HEK293T (cell line): ENCODE measurements at regions of chr7 and their contacts with region 1.

Region 1: GRCh38 chr7:73738612-73739374 is at the start of gene ABHD11:
- DNase-seq: peak; percentile 99

Region 2: DNA sequence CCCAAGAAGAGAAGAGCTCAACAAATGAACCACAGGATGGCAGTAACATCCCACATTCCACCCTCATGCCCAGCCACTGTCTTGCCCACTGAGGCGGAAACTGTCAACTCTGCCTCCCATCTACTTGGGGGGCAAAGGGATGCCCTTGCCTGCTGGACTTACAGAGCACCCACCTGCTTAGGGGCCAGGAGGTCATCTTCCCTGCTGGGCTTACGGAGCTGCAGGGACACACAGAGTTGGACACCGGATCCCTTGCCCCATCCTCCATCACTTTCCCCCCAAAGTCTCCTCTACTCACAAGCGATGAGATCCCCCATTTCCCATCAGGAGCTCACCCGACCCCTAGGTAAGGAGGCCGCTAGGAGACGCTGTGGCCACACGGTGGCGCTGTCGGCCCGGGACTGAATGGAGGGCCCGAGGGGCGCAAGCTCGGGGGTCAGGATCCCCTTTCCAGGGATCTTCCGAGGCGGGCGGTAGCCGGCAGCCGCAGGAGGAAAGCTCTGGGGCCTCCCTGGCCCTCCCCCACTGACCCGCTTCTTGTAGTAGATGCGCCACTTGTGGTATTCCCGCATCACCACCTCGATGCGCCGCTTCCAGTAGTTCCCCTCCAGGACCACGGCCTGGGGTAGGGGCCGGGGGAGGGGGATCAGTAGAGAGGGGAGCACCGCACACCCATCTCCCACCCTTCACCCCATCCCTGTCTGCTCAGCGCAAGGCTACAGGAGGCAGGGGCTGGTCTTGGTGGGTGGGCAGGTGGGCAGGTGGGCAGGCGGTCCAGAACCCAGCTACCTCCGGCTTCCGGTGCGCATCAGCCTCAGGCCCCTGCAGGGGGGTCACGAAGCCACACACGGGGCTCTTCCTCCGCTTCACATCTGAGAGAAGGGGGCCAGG is 131.7 kb before region 1 on chr7:
- CTCF ChIA-PET with region 1: interaction called, 21 read pairs
- POLR2A ChIA-PET with region 1: no interaction called
- DNase-seq: peak; percentile 80

Region 3: GRCh38 chr7:73718905-73719805 is 19.6 kb before region 1 on chr7 and contains the start of gene STX1A:
- CTCF ChIA-PET with region 1: interaction called, 13 read pairs
- POLR2A ChIA-PET with region 1: interaction called, 5 read pairs
- DNase-seq: peak; percentile 94

Region 4: DNA sequence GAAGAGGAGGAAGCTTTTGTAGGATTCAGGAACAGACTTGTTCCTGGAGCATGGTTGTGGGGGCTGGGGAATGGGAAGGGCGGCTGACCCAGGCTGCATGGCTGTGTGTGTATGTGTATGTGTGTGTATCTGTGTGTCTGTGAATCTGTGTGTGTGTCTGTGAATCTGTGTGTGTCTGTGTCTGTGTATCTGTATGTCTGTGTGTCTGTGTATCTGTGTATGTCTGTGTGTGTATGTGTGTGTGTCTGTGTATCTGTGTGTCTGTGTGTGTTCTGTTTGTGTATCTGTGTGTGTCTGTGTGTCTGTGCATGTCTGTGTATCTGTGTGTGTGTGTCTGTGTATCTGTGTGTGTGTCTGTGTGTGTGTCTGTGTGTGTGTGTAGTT is 12.7 kb before region 1 on chr7:
- CTCF ChIA-PET with region 1: interaction called, 13 read pairs
- POLR2A ChIA-PET with region 1: interaction called, 8 read pairs
- DNase-seq: no peak

Region 5: DNA sequence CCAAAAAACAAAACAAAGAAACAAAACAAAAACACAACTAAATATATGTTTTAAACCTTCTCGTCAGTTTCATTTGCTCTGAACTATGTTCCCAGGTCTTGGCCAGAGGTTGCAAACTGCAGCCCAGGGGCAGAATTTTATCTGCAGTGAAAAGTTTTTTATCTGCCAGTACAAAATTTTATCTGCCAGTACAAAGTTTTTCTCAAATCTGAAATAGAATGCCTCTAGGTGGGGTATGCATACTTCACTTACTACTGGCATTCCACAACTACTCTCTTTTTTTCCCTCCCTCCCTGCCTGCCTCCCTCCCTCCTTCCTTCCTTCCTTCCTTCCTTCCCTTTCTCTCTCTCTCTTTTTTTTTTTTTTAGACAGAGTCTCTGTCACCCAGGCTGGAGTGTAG is 40.7 kb after region 1 on chr7:
- CTCF ChIA-PET with region 1: no interaction called
- POLR2A ChIA-PET with region 1: no interaction called
- DNase-seq: no peak

Region 6: GRCh38 chr7:73851410-73852234 is 112.8 kb after region 1 on chr7:
- CTCF ChIA-PET with region 1: interaction called, 5 read pairs
- POLR2A ChIA-PET with region 1: interaction called, 13 read pairs
- DNase-seq: no peak